Calu3 (cell line): ENCODE measurements at regions of chr9 and their contacts with region 1.

Region 1: DNA sequence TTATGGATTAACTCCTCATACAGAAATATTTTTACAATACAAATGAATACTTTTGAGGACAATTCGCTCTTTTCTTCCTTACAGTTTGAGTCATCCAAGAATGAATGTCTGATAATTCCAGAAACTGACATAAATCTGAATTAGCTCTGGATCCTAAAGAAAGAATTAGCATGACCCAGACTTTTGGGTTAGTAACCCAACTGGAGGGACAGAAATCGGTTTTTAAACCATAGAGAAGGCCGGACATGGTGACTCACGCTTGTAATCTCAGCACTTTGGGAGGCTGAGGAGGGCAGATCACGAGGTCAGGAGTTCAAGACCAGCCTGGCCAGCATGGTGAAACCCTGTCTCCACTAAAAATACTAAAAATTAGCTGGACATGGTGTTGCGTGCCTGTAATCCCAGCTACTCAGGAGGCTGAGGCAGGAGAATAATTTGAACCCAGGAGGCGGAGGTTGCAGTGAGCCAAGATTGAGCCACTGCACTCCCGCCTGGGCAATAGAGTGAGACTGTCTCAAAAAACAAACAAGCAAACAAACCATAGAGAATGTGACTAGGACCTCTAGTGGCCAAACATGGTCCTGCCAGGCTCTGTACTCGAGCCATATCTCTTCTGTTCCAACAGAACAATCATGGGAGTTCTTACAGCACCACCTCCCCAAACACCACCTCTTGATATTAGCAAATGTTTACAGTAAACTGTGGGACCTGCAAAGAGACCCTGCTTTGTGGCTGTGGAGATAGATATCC is 44.8 kb downstream of the LURAP1L start:
- DNase-seq: peak; percentile 40
- H3K4me3 Mint-ChIP-seq: peak overlapping the region; percentile 54
- H3K27ac Mint-ChIP-seq: peak overlapping the region; percentile 100
- H3K4me1 Mint-ChIP-seq: peaks cover 40% of the 10 kb centered on the region
- H3K27me3 Mint-ChIP-seq: no peaks in the 10 kb centered on the region
- CTCF ChIP-seq: peak; percentile 15

Region 2: GRCh38 chr9:12368569-12368968 is 451.0 kb before region 1 on chr9:
- CTCF ChIA-PET with region 1: no interaction called
- intact Hi-C with region 1: no loop called
- DNase-seq: no peak
- H3K4me3 Mint-ChIP-seq: no peak overlapping the region
- H3K27ac Mint-ChIP-seq: no peak overlapping the region
- H3K4me1 Mint-ChIP-seq: no peaks in the 10 kb centered on the region
- H3K27me3 Mint-ChIP-seq: no peaks in the 10 kb centered on the region
- CTCF ChIP-seq: no peak

Region 3: DNA sequence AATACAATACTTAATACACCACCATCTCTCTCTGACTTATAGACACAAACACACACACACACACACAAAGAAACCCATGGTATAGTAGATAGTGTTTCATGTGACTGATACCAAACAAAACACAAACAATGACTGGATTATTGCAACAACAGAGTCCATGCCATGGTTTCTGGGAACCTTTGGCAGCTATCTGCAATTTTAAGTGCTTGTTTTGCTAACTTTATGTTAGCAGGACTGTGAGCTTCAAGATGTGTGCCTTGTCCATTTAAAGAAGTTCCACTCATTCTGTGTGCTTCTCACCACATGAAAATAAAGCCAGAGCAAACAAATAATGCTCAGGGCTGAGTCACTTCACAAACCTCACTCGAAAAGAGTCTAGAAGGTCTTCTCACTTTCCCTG is 59.9 kb before region 1 on chr9:
- CTCF ChIA-PET with region 1: interaction called, 10 read pairs
- intact Hi-C with region 1: no loop called
- DNase-seq: no peak
- H3K4me3 Mint-ChIP-seq: no peak overlapping the region
- H3K27ac Mint-ChIP-seq: no peak overlapping the region
- H3K4me1 Mint-ChIP-seq: peaks cover 39% of the 10 kb centered on the region
- H3K27me3 Mint-ChIP-seq: no peaks in the 10 kb centered on the region
- CTCF ChIP-seq: no peak

Region 4: DNA sequence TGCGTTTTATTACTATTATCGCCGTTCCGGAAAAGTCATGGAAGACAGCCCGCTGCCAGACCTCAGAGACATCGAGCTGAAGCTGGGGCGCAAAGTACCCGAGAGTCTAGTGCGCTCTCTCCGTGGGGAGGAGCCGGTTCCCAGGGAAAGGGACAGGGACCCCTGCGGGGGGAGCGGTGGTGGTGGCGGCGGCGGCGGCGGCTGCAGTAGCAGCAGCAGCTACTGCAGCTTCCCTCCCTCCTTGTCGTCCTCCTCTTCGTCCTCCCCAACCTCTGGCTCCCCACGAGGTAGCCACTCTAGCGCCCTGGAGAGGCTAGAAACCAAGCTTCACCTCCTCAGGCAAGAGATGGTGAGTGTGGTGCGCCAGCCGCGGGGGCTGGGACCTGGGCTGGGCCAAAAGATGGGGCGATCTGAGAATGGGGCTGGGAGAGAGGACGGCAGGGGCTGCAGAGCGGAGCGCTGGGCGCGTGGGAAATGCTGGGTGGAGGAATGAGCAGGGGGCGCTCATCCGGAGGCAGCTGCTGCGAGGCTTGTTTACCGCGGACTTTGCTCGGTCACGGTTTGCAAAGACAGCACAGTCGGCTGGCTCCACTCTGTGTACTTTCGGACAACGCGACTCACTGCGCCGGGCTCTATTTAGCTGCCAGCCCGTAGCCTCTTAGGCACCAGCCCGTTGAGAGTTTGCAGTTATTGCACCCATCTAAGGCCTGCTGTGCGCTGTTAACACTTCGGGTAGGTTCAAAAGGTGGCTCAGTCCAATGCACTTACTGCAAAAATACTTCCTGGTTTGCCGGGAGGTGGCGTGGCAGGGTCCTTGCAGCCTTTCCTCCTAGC is 43.7 kb before region 1 on chr9:
- CTCF ChIA-PET with region 1: interaction called, 32 read pairs
- intact Hi-C with region 1: loop called (anchors 1 kb)
- DNase-seq: peak; percentile 83
- H3K4me3 Mint-ChIP-seq: peak overlapping the region; percentile 99
- H3K27ac Mint-ChIP-seq: peak overlapping the region; percentile 91
- H3K4me1 Mint-ChIP-seq: peaks cover 20% of the 10 kb centered on the region
- H3K27me3 Mint-ChIP-seq: no peaks in the 10 kb centered on the region
- CTCF ChIP-seq: peak; percentile 12

Region 5: DNA sequence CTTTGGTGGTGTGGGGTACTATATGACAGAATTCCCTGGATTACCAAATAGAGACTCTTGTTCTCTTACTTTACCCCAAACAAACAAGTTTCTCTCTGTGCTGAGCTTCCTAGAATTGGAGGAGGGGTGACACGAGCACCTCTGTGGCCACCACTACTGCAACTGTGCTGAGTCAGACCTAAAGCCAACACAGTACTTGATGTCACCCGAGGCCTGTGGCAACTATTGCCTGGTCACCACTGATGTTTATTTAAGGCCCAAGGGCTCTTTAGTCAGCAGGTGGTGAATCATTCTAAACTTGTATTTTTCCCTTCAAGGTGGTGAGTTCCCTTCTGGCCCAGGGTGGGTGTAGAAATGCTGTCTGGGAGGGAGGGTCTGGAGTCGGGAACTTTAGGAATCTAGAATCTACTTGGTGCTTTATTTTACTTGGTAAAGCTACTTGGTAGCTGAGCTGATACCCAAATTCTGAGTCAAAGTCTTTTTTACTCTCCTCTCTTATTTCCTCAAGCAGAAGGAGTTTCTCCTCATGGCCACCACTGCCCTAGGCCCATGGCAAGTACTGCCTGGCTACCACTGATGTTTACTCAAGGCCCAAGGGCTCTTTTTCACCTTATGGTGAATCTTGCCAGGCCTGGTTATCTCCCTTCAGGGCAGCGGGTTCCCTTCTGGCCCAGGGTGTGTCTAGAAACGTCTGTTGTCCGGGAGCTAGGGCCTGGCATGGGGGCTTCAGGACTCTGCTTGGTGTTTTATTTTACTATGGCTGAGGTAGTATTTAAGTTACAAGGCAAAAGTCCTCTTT is 35.0 kb before region 1 on chr9:
- CTCF ChIA-PET with region 1: interaction called, 12 read pairs
- intact Hi-C with region 1: loop called (anchors 2 kb)
- DNase-seq: peak; percentile 77
- H3K4me3 Mint-ChIP-seq: peak overlapping the region; percentile 62
- H3K27ac Mint-ChIP-seq: peak overlapping the region; percentile 91
- H3K4me1 Mint-ChIP-seq: peaks cover 46% of the 10 kb centered on the region
- H3K27me3 Mint-ChIP-seq: no peaks in the 10 kb centered on the region
- CTCF ChIP-seq: no peak

Region 6: GRCh38 chr9:12859704-12860251 is 40.2 kb after region 1 on chr9:
- CTCF ChIA-PET with region 1: interaction called, 6 read pairs
- intact Hi-C with region 1: loop called (anchors 2 kb)
- DNase-seq: peak; percentile 50
- H3K4me3 Mint-ChIP-seq: peak overlapping the region; percentile 58
- H3K27ac Mint-ChIP-seq: peak overlapping the region; percentile 97
- H3K4me1 Mint-ChIP-seq: peaks cover 53% of the 10 kb centered on the region
- H3K27me3 Mint-ChIP-seq: no peaks in the 10 kb centered on the region
- CTCF ChIP-seq: no peak

Region 7: DNA sequence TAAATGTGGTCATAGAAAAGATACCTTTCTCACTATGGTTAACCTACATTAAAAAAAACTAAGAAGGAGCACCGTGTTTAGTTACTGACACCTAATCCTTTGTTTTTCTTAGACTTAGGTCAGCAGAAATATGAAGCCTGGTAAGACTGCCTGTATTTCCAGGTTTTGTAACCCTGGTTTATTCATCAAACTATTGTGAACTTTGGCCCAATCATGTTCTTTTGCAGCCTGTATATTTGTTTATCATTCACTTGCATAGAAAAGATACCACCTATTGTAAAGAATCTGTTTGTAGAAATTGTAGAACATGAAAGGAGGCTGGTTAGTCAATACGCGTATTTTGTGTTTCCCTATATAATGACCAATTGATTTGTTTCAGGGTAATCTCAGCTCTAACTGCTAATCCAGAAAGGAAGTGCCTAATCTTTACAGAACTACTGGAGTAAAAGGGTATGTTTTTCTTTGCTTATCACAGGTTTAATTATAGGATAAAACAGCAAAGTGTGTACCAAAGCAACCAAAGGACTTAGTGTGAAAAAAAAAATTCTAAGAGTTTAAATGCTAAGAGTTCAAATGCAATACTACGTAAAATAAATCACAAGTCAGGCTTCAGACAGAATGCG is 58.9 kb after region 1 on chr9:
- CTCF ChIA-PET with region 1: interaction called, 4 read pairs
- intact Hi-C with region 1: loop called (anchors 1 kb)
- DNase-seq: no peak
- H3K4me3 Mint-ChIP-seq: peak overlapping the region; percentile 40
- H3K27ac Mint-ChIP-seq: peak overlapping the region; percentile 92
- H3K4me1 Mint-ChIP-seq: peaks cover 44% of the 10 kb centered on the region
- H3K27me3 Mint-ChIP-seq: no peaks in the 10 kb centered on the region
- CTCF ChIP-seq: no peak

Region 8: DNA sequence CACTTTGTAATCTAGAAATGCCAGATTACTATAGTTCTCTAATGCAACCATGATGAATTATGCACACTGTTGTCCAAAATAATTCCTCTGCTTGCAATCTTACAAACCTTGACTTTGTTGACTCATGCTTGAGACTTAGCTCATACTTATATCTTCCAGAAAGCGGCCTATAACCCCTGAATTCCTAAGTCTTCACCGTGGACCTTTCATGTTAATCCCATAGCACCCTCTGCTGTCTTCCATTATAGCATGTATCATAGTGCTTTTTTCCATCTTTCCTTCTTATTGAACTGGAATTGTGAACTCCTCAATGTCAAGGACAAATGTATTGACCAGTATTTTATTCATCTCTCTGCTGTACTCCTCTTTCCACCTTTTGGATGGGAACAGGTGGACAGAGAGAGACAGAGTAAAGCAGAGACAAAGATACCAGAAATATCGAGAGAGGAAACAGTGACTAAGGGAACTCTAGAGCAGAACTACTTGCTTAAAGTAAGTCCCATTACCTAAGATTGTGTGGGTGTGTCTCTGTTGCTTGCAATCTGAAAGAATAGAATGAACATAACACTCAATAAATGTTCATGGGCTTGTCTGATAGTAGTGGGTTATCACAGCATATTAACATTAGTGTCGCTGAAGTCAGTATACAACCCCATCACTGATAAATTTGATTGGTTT is 65.3 kb after region 1 on chr9:
- CTCF ChIA-PET with region 1: interaction called, 15 read pairs
- intact Hi-C with region 1: loop called (anchors 1 kb)
- DNase-seq: peak; percentile 22
- H3K4me3 Mint-ChIP-seq: peak overlapping the region; percentile 1
- H3K27ac Mint-ChIP-seq: peak overlapping the region; percentile 61
- H3K4me1 Mint-ChIP-seq: peaks cover 32% of the 10 kb centered on the region
- H3K27me3 Mint-ChIP-seq: no peaks in the 10 kb centered on the region
- CTCF ChIP-seq: no peak

Region 9: DNA sequence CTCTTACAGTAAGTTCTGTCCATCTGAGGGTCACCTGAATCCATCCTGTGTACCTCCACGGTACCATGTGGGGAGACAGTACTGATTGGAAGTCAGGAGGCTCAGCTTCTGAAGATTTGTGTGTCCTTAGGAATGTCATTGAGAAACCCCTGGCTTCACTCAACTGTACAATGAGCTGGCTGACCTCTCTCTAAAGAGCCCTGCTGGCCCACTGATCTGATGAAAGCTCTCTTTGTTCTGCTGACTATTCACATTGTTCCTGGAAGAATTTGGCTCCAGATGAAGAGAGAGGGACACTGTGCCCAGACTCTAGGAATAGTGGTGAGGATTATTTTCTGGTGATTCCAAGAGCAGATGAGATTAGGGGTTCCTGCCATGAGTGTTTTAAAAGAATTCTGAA is 96.4 kb after region 1 on chr9:
- CTCF ChIA-PET with region 1: no interaction called
- intact Hi-C with region 1: no loop called
- DNase-seq: peak; percentile 4
- H3K4me3 Mint-ChIP-seq: no peak overlapping the region
- H3K27ac Mint-ChIP-seq: no peak overlapping the region
- H3K4me1 Mint-ChIP-seq: no peaks in the 10 kb centered on the region
- H3K27me3 Mint-ChIP-seq: no peaks in the 10 kb centered on the region
- CTCF ChIP-seq: no peak

Region 10: GRCh38 chr9:13049223-13049622 is 229.6 kb after region 1 on chr9:
- CTCF ChIA-PET with region 1: no interaction called
- intact Hi-C with region 1: no loop called
- DNase-seq: no peak
- H3K4me3 Mint-ChIP-seq: no peak overlapping the region
- H3K27ac Mint-ChIP-seq: no peak overlapping the region
- H3K4me1 Mint-ChIP-seq: no peaks in the 10 kb centered on the region
- H3K27me3 Mint-ChIP-seq: peaks cover 26% of the 10 kb centered on the region
- CTCF ChIP-seq: no peak